GM12878 (cell line): ENCODE measurements at regions of chr3 and their contacts with region 1.

Region 1: GRCh38 chr3:112519424-112520001 is 20.2 kb upstream of the BTLA start:
- DNase-seq: peak; percentile 68
- ATAC-seq: peak; percentile 83
- H3K4me3 ChIP-seq: no peak overlapping the region
- H3K27ac ChIP-seq: peak overlapping the region; percentile 54
- H3K4me1 ChIP-seq: peaks cover 4% of the 10 kb centered on the region; the same call in 1 of the 2 replicates
- H3K27me3 ChIP-seq: no peaks in the 10 kb centered on the region
- CTCF ChIP-seq: peak; percentile 68 to 72 (median 70)
- EP300 ChIP-seq: no peak
- POLR2A ChIP-seq: no peak
- RAD21 ChIP-seq: peak; percentile 92

Region 2: GRCh38 chr3:112327371-112327951 is 192.1 kb before region 1 on chr3:
- CTCF ChIA-PET with region 1: interaction called, 31 read pairs
- POLR2A ChIA-PET with region 1: interaction called, 8 read pairs
- RAD21 ChIA-PET with region 1: interaction called, 21 read pairs
- SMC1A ChIA-PET with region 1: interaction called, 60 read pairs
- in situ Hi-C with region 1: loop called (anchors 5 kb)
- intact Hi-C with region 1: loop called (anchors 1 kb)
- DNase-seq: peak; percentile 79
- ATAC-seq: peak; percentile 100
- H3K4me3 ChIP-seq: no peak overlapping the region
- H3K27ac ChIP-seq: no peak overlapping the region
- H3K4me1 ChIP-seq: no peaks in the 10 kb centered on the region
- H3K27me3 ChIP-seq: no peaks in the 10 kb centered on the region
- CTCF ChIP-seq: peak; percentile 60 to 82 (median 64)
- EP300 ChIP-seq: no peak
- POLR2A ChIP-seq: no peak
- RAD21 ChIP-seq: peak; percentile 98

Region 3: DNA sequence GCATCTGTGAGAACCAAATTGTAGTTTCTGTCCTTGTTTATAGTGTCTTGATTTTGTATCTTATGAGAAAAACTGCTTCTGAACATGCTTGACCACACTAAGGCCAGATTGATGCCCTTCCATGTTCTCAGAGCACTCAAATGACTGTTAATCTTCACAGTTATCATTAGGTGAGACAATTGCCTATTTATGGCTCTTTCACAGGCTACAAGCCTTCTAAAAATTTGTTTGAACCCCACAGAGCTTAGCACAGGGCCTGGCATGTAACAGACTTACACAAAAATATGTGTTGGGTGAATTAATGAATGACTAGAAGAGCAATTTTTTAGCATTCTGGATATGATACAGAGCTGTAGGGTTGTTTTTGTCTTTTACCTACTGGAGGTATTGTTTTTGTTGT is 63.4 kb before region 1 on chr3:
- CTCF ChIA-PET with region 1: interaction called, 6 read pairs
- POLR2A ChIA-PET with region 1: interaction called, 3 read pairs
- RAD21 ChIA-PET with region 1: interaction called, 8 read pairs
- SMC1A ChIA-PET with region 1: interaction called, 15 read pairs
- in situ Hi-C with region 1: no loop called
- intact Hi-C with region 1: loop called (anchors 1 kb)
- DNase-seq: no peak
- ATAC-seq: peak; percentile 46
- H3K4me3 ChIP-seq: no peak overlapping the region
- H3K27ac ChIP-seq: peak overlapping the region; percentile 61
- H3K4me1 ChIP-seq: peaks cover 17% of the 10 kb centered on the region
- H3K27me3 ChIP-seq: no peaks in the 10 kb centered on the region
- CTCF ChIP-seq: no peak
- EP300 ChIP-seq: peak; percentile 59 to 68; a peak in 1 of 4 replicates
- POLR2A ChIP-seq: no peak
- RAD21 ChIP-seq: peak; percentile 21; the same call in 1 of the 2 replicates

Region 4: GRCh38 chr3:112482675-112483074 is 36.8 kb before region 1 on chr3:
- CTCF ChIA-PET with region 1: interaction called, 3 read pairs
- POLR2A ChIA-PET with region 1: interaction called, 3 read pairs
- RAD21 ChIA-PET with region 1: no interaction called
- SMC1A ChIA-PET with region 1: interaction called, 6 read pairs
- in situ Hi-C with region 1: no loop called
- intact Hi-C with region 1: loop called (anchors 5 kb)
- DNase-seq: no peak
- ATAC-seq: peak; percentile 45
- H3K4me3 ChIP-seq: no peak overlapping the region
- H3K27ac ChIP-seq: peak overlapping the region; percentile 58; the same call in 1 of the 2 replicates
- H3K4me1 ChIP-seq: peaks cover 30% of the 10 kb centered on the region
- H3K27me3 ChIP-seq: no peaks in the 10 kb centered on the region
- CTCF ChIP-seq: no peak
- EP300 ChIP-seq: no peak
- POLR2A ChIP-seq: no peak
- RAD21 ChIP-seq: no peak

Region 5: DNA sequence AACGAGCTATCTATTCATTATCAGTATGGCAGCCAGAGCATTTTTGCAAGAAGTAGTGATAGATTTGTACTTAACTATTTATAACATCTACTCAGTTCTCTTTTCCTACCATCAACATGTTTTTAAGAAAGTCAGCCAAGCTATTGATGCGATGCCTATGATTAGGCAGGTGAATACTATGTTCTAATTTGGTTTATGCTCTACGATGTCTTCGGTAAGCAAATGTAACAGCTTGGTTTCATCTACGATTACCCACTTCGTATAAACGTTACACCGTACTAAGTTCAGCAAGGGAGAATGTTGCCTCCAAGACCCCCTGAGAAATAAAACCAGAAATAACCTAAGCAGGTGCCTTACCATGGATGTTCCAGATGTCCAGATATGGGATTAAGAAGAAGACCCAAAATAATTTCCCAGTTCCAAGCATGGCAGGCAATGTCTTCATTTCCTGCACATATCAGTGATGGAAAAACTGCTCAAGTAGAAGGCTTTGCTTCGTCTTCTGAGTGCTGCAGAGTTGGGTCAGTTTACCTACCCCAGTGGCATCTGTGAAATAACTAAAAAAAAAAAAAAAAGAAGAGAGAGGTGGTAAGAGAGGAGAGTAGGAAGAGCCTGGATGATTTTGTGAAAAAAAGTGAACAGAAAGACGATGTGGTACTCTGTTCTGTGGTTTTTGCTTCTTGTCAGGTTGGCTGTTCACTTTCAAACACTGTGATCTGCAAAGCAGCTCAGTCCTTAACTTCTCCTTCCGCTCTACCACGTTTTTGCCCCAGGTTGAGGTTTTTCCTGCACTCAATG is 20.4 kb before region 1 on chr3 and contains the start of gene BTLA:
- CTCF ChIA-PET with region 1: interaction called, 19 read pairs
- POLR2A ChIA-PET with region 1: interaction called, 51 read pairs
- RAD21 ChIA-PET with region 1: interaction called, 64 read pairs
- SMC1A ChIA-PET with region 1: interaction called, 143 read pairs
- in situ Hi-C with region 1: no loop called
- intact Hi-C with region 1: loop called (anchors 2 kb)
- DNase-seq: peak; percentile 79
- ATAC-seq: peak; percentile 64
- H3K4me3 ChIP-seq: peak within 1 kb of the TSS; percentile 89
- H3K27ac ChIP-seq: peak within 1 kb of the TSS; percentile 87
- H3K4me1 ChIP-seq: peaks cover 13% of the 10 kb centered on the region
- H3K27me3 ChIP-seq: no peaks in the 10 kb centered on the region
- CTCF ChIP-seq: no peak
- EP300 ChIP-seq: peak in 1 of 2 experiments; percentile 39; a peak in 1 of 4 replicates
- POLR2A ChIP-seq: peak; percentile 52; the same call in 1 of the 2 replicates
- RAD21 ChIP-seq: no peak
- polyA plus RNA-seq, gene BTLA: 101 to 134 TPM